Activated CD8-positive, alpha-beta T cell treated with anti-CD3 and anti-CD28 coated beads, Interleukin-2, amount 10 ng/mL, durations not matched to agents 7 days and 5 days (primary cell): ENCODE measurements at regions of chr1 and their contacts with region 1.

Region 1: GRCh38 chr1:85240174-85240601 is 19.3 kb downstream of the C1orf52 start:
- DNase-seq: peak; percentile 31
- ATAC-seq: no peak
- H3K4me3 Mint-ChIP-seq: no peak overlapping the region
- H3K27ac Mint-ChIP-seq: peak overlapping the region; percentile 61
- H3K4me1 Mint-ChIP-seq: peaks cover 22% of the 10 kb centered on the region
- H3K27me3 Mint-ChIP-seq: peaks cover 5% of the 10 kb centered on the region

Region 2: DNA sequence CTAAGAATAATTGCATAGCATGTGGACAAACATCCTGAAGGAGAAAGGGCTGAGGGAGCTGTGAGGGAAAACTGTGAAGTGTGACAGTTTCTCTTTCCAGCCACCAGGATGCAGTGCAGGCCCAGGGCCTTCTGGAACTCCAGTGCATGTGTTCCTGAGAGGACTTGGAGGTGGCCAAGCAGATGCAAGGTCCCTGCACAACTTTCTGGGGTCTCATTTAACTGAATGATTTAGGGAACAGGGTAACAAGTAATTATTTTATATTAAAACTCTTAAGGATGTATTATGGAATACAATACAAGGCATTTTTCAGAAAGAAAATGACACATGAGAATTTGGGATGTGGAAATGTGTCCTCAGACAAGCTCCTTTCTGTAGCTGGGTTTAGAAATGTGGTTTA is 130.7 kb before region 1 on chr1:
- CTCF ChIA-PET with region 1: interaction called, 21 read pairs
- POLR2A ChIA-PET with region 1: no interaction called
- DNase-seq: peak; percentile 48
- ATAC-seq: peak; percentile 85
- H3K4me3 Mint-ChIP-seq: no peak overlapping the region
- H3K27ac Mint-ChIP-seq: no peak overlapping the region
- H3K4me1 Mint-ChIP-seq: no peaks in the 10 kb centered on the region
- H3K27me3 Mint-ChIP-seq: peaks cover 16% of the 10 kb centered on the region